Activated CD8-positive, alpha-beta T cell treated with anti-CD3 and anti-CD28 coated beads for 36 hours (primary cell): ENCODE measurements at regions of chr6 and their contacts with region 1.

Region 1: GRCh38 chr6:135568366-135568765 is 70.8 kb upstream of the AHI1 start:
- DNase-seq: peak; percentile 82
- ATAC-seq: peak; percentile 80
- H3K4me3 Mint-ChIP-seq: peak overlapping the region; percentile 16
- H3K27ac Mint-ChIP-seq: peak overlapping the region; percentile 82
- H3K4me1 Mint-ChIP-seq: peaks cover 36% of the 10 kb centered on the region
- H3K27me3 Mint-ChIP-seq: peaks cover 4% of the 10 kb centered on the region
- CTCF ChIP-seq: no peak

Region 2: GRCh38 chr6:135514706-135515105 is 53.7 kb before region 1 on chr6:
- CTCF ChIA-PET with region 1: no interaction called
- POLR2A ChIA-PET with region 1: no interaction called
- intact Hi-C with region 1: no loop called
- DNase-seq: no peak
- ATAC-seq: no peak
- H3K4me3 Mint-ChIP-seq: no peak overlapping the region
- H3K27ac Mint-ChIP-seq: no peak overlapping the region
- H3K4me1 Mint-ChIP-seq: peaks cover 9% of the 10 kb centered on the region
- H3K27me3 Mint-ChIP-seq: peaks cover 4% of the 10 kb centered on the region
- CTCF ChIP-seq: no peak

Region 3: DNA sequence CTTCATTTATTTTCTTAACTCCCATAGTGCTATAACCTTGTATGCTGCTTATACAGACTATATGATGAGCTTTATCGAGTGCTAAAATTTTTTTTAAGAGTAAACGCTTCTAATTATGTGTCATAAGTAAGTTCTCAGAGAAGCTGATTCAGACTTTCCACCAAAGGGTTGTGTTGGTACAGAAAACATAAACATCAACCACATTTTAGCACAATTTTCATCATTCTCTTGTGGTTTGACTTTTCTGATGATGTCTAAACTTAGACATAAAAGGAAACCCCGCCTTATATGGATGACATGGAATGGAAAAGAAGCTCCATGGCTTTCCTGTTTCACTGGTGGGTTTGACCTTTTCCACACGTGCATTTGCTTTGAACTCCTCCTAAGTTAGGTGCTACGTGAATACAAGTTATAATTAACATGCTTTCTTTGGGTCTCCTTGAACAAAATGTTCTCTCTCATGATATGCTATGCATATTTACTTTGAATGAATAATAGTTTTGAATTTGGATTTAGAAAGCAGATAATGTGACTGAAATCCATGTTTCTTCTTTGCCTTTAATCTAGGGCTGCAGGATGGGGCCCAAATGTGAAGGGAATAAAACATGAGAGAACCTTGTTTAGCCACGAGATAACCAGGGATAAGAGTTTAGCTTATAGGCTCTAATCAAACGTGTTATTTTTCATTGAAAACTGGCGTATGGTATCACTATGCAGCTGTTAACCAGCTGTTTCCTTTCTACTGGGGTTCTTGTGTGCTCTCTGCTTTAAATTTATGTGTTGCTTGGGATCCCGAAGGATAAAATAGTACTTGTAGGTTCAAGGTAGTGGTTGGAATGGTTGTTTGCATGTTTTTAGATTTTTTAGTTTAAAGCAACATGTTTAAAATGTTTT is 56.3 kb after region 1 on chr6:
- CTCF ChIA-PET with region 1: no interaction called
- POLR2A ChIA-PET with region 1: no interaction called
- intact Hi-C with region 1: loop called (anchors 5 kb)
- DNase-seq: peak; percentile 60
- ATAC-seq: peak; percentile 85
- H3K4me3 Mint-ChIP-seq: no peak overlapping the region
- H3K27ac Mint-ChIP-seq: peak overlapping the region; percentile 91
- H3K4me1 Mint-ChIP-seq: peaks cover 42% of the 10 kb centered on the region
- H3K27me3 Mint-ChIP-seq: peaks cover 3% of the 10 kb centered on the region
- CTCF ChIP-seq: no peak